Heart right ventricle (tissue), 16 donors: ENCODE measurements at regions of chr6 and their contacts with region 1.

Region 1: DNA sequence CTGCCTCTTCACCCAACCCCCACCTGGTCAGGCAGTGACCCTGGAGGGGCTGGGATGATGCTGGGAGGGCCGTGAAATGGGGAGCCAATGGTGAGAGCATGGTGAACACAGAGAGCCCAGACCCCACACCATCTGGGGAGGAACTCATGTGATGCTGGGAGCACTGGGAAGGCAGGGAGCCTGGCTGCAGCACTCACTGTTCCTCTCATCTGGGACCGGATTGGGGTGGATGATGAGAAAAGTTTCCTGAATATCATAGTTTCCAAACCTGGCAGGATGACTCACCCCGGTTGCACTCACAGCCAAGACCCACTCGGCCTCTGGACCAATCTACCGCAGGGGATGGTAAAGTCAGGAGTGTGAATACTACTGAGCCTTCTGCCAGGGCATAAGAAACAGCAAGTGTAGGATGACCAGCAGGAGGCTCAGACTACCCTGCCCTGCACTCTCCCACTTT is 21.8 kb downstream of the ULBP1 start:
- DNase-seq: no peak
- ATAC-seq: no peak
- H3K4me3 ChIP-seq: no peak overlapping the region
- H3K27ac ChIP-seq: no peak overlapping the region
- H3K4me1 ChIP-seq: peaks cover 5 to 12% (median 8%) of the 10 kb centered on the region in 9 donors
- H3K27me3 ChIP-seq: peaks cover 26 to 93% (median 91%) of the 10 kb centered on the region in 7 donors
- CTCF ChIP-seq: no peak

Region 2: DNA sequence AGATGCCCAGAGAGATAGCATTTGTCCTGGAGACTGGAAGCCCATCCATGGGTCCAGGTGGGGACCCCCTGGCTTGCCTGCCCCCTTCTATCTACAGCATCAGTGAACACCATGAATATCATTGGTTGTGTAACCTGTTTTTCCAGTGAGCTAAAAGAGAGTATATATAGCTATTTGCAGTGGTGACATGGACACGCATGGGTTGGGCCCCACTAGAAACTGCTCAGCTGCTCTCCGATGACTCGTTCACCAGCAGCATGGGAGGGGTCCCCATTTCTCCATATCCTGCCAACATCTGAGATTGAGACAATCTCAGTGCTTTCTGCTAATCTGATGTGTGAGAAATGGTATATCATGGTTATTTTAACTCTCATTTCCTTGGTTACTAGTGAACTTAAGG is 496.7 kb before region 1 on chr6:
- intact Hi-C with region 1: no loop called
- DNase-seq: no peak
- ATAC-seq: no peak
- H3K4me3 ChIP-seq: no peak overlapping the region
- H3K27ac ChIP-seq: no peak overlapping the region
- H3K4me1 ChIP-seq: peaks cover 0 to 22% (median 18%) of the 10 kb centered on the region in 9 donors
- H3K27me3 ChIP-seq: peaks cover 0 to 10% (median 0%) of the 10 kb centered on the region in 7 donors
- CTCF ChIP-seq: no peak

Region 3: DNA sequence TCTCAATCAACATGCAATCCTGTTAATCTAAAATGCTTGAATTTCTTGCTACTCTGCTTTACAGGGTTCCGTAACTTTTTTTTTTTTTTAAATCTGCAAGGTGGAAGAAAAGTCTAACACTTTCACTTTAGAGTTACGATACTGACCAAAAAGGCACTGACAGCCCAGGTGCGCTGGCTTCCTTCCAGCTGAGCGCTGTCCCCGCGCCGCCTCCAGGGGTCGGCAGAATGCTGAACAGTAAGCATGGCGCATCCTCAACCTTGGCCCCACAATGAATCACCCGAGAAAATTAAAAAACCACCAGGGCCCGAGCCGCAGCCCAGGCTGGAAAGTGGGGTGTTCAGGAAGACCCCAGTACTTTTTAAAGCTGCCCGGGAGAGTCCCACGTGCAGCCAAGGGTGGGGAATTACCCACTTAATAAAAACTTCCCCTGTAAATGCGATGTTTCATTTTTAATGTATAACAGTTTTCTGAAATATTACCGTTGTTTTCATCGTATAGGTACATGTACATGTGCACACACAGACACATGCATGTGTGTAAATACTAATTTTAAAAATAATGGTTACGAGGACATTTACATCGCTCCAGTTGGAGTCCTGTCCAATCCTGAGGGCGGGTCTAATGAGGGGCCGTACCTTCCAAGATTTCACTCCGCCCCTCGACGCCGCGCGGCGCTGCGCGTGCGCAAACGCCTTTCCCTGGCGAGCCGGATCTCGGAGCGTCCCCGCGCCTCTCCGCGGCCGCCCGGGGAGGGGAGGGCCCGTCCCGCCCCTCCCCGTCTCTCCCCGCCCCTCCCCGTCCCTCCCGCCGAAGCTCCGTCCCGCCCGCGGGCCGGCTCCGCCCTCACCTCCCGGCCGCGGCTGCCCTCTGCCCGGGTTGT is 419.7 kb before region 1 on chr6 and contains the start of gene GINM1:
- intact Hi-C with region 1: no loop called
- DNase-seq: peak; percentile 93 to 97
- ATAC-seq: peak; percentile 96 to 98 (median 98)
- H3K4me3 ChIP-seq: peak within 1 kb of the TSS; percentile 80 to 100 (median 98)
- H3K27ac ChIP-seq: peak within 1 kb of the TSS; percentile 44 to 97 (median 95)
- H3K4me1 ChIP-seq: peaks cover 0 to 35% (median 20%) of the 10 kb centered on the region in 9 donors
- H3K27me3 ChIP-seq: no peaks in the 10 kb centered on the region
- CTCF ChIP-seq: peak in 8 of 9 donors; percentile 41 to 81 (median 64)
- total RNA-seq, gene GINM1: 48.6 to 59.3 (median 55.7) TPM

Region 4: GRCh38 chr6:149600508-149600907 is 385.0 kb before region 1 on chr6:
- intact Hi-C with region 1: no loop called
- DNase-seq: no peak
- ATAC-seq: no peak
- H3K4me3 ChIP-seq: no peak overlapping the region
- H3K27ac ChIP-seq: no peak overlapping the region
- H3K4me1 ChIP-seq: no peaks in the 10 kb centered on the region
- H3K27me3 ChIP-seq: no peaks in the 10 kb centered on the region
- CTCF ChIP-seq: no peak

Region 5: DNA sequence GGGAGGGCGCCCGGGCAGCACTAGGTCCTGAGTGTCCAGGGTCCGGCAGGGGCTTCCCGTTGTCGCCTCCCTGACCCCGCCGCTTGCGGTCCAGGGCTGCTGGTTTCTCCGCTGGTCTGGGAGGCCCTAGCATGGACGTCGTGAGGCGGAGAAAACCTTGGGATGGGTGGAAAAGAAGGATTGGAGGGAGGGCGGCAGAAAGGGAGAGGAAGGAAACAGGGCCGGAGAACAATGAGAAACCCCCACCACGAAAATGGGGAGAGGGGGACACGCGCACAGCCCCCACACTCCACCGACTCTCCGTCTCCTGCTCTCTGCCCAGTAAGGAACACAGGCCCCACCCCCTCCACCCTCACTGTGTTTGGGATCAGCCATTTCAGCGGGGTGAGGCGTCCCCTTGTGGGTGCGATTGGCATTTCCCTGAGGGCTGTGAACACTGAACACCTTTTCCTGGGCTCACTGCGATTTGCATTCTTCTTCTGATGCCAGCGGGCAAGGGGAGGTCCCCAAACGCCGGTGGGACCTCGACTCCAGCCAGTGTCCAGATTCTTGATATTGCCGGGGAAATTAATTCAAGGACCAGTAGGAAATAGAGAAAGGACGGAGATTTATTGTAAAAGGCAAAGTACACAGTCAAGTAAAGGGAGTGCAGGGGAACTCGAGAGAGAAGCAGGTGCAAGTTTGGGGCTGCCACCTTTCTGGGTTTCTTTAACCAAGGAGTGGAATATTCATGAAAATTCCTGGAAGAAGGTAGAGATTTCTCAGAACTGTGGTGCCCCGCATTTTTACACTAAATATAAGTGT is 59.3 kb before region 1 on chr6:
- intact Hi-C with region 1: no loop called
- DNase-seq: peak; percentile 87 to 91
- ATAC-seq: peak; percentile 89 to 94 (median 92)
- H3K4me3 ChIP-seq: peak overlapping the region; percentile 38 to 62 (median 60)
- H3K27ac ChIP-seq: peak overlapping the region in 9 of 10 donors; percentile 27 to 67 (median 57)
- H3K4me1 ChIP-seq: peaks cover 3 to 33% (median 23%) of the 10 kb centered on the region in 9 donors
- H3K27me3 ChIP-seq: peaks cover 0 to 92% (median 28%) of the 10 kb centered on the region in 7 donors
- CTCF ChIP-seq: peak; percentile 81 to 93 (median 88)

Region 6: GRCh38 chr6:149960488-149960887 is 25.0 kb before region 1 on chr6:
- intact Hi-C with region 1: loop called in 1 of 10 experiments (anchors 1 kb)
- DNase-seq: no peak
- ATAC-seq: no peak
- H3K4me3 ChIP-seq: no peak overlapping the region
- H3K27ac ChIP-seq: no peak overlapping the region
- H3K4me1 ChIP-seq: peaks cover 0 to 29% (median 24%) of the 10 kb centered on the region in 9 donors
- H3K27me3 ChIP-seq: peaks cover 16 to 96% (median 78%) of the 10 kb centered on the region in 7 donors
- CTCF ChIP-seq: no peak